ENCODE measurements at regions of chr10 and their contacts with region 1.

Region 1: GRCh38 chr10:12965571-12965970 is 35.9 kb downstream of the CCDC3 start:
- DNase-seq: no peak
- H3K4me3 Mint-ChIP-seq: no peak overlapping the region
- H3K27ac Mint-ChIP-seq: no peak overlapping the region
- H3K4me1 Mint-ChIP-seq: peaks cover 5% of the 10 kb centered on the region
- H3K27me3 Mint-ChIP-seq: peaks cover 23% of the 10 kb centered on the region

Region 2: GRCh38 chr10:12729885-12730284 is 235.7 kb before region 1 on chr10:
- CTCF ChIA-PET with region 1: no interaction called
- POLR2A ChIA-PET with region 1: no interaction called
- intact Hi-C with region 1: loop called (anchors 5 kb)
- DNase-seq: peak; percentile 34
- H3K4me3 Mint-ChIP-seq: no peak overlapping the region
- H3K27ac Mint-ChIP-seq: no peak overlapping the region
- H3K4me1 Mint-ChIP-seq: peaks cover 21% of the 10 kb centered on the region
- H3K27me3 Mint-ChIP-seq: no peaks in the 10 kb centered on the region

Region 3: DNA sequence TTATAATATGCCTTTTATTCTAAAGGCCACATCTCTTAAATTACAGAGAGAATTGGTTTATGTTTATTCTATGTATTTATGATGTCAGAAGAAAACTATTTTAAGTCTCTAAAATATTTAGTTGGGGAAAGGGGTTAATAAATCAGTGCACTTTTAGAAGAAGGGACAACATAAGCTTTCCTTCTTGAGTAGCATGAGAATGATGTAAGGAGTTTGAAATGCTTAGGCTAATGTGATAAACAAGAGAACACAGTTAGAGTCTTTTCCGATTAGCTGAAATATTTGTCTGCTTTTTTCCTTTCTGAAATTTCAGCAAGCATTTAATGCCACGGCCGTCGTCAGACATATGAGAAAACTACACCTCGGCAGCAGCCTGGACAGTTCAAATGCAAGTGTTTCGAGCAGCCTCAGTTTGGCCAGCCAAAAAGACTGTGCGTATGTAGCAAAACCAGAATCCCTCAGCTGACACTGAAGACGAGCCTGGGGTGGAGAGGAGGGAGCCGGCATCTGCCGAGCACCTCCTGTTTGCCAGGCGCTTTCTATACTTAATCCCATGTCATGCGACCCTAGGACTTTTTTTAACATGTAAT is 140.2 kb before region 1 on chr10:
- CTCF ChIA-PET with region 1: no interaction called
- POLR2A ChIA-PET with region 1: no interaction called
- intact Hi-C with region 1: no loop called
- DNase-seq: no peak
- H3K4me3 Mint-ChIP-seq: no peak overlapping the region
- H3K27ac Mint-ChIP-seq: no peak overlapping the region
- H3K4me1 Mint-ChIP-seq: no peaks in the 10 kb centered on the region
- H3K27me3 Mint-ChIP-seq: no peaks in the 10 kb centered on the region

Region 4: DNA sequence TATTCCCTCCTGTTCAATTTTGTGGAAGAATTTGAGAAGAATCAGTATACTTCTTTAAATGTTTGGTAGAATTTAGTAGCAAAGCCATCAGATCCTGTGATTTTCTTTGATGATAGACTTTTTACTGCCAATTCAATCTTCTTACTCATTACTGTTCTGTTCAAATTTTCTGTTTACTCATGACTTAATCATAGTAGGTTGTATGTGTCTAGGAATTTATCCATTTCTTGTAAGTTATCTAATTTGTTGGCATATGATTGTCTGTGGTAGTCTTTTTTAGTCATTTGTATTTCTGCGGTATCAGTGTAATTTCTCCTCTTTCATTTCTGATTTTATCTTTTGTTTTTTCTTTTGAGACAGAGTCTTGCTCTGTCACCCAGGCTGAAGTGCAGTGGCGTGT is 51.5 kb before region 1 on chr10:
- CTCF ChIA-PET with region 1: no interaction called
- POLR2A ChIA-PET with region 1: no interaction called
- intact Hi-C with region 1: loop called (anchors 2 kb)
- DNase-seq: no peak
- H3K4me3 Mint-ChIP-seq: no peak overlapping the region
- H3K27ac Mint-ChIP-seq: no peak overlapping the region
- H3K4me1 Mint-ChIP-seq: peaks cover 10% of the 10 kb centered on the region
- H3K27me3 Mint-ChIP-seq: peaks cover 13% of the 10 kb centered on the region

Region 5: GRCh38 chr10:12981570-12981969 is 16.0 kb after region 1 on chr10:
- CTCF ChIA-PET with region 1: no interaction called
- POLR2A ChIA-PET with region 1: no interaction called
- intact Hi-C with region 1: loop called (anchors 1 kb)
- DNase-seq: no peak
- H3K4me3 Mint-ChIP-seq: no peak overlapping the region
- H3K27ac Mint-ChIP-seq: no peak overlapping the region
- H3K4me1 Mint-ChIP-seq: peaks cover 7% of the 10 kb centered on the region
- H3K27me3 Mint-ChIP-seq: peaks cover 23% of the 10 kb centered on the region